ENCODE measurements at regions of chr14 and their contacts with region 1.

Region 1: DNA sequence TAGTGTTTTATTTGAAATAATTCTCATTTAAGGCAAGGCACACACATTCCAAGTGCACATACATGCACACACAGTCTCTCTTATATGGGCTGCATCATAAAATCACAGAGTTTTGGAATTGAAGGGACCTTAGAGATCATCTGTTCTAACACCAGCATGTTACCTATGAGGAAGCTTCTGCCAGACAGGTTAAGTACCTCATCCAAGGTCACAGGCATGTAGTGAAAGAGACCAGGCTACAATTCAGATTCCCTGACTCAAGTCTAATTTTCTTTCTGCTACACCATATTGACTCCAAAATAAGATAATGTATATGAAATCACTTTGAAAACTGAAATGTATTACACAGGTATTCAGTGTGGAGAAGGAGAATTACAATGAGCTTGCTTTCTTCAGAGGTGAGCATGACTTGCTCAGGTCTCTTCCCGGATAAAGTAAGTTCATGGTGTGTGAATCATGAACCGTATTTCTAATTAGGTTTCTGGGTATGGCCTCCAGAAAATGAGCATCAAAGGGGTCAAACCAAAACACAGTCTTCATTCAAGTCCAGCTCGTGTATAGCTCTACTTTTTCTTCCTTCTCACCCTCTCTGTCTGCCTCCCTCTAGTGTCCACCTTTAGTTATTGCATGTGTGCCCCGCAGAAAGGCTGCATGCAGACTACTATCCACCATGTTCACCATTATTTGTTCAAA is 411.9 kb downstream of the FUT8 start:
- H3K4me3 ChIP-seq: no peak overlapping the region
- H3K27ac ChIP-seq: no peak overlapping the region
- H3K4me1 ChIP-seq: no peaks in the 10 kb centered on the region
- CTCF ChIP-seq: peak; percentile 46

Region 2: GRCh38 chr14:65164068-65164824 is 660.2 kb before region 1 on chr14:
- CTCF ChIA-PET with region 1: interaction called, 13 read pairs
- POLR2A ChIA-PET with region 1: no interaction called
- H3K4me3 ChIP-seq: no peak overlapping the region
- H3K27ac ChIP-seq: no peak overlapping the region
- H3K4me1 ChIP-seq: no peaks in the 10 kb centered on the region
- CTCF ChIP-seq: no peak

Region 3: DNA sequence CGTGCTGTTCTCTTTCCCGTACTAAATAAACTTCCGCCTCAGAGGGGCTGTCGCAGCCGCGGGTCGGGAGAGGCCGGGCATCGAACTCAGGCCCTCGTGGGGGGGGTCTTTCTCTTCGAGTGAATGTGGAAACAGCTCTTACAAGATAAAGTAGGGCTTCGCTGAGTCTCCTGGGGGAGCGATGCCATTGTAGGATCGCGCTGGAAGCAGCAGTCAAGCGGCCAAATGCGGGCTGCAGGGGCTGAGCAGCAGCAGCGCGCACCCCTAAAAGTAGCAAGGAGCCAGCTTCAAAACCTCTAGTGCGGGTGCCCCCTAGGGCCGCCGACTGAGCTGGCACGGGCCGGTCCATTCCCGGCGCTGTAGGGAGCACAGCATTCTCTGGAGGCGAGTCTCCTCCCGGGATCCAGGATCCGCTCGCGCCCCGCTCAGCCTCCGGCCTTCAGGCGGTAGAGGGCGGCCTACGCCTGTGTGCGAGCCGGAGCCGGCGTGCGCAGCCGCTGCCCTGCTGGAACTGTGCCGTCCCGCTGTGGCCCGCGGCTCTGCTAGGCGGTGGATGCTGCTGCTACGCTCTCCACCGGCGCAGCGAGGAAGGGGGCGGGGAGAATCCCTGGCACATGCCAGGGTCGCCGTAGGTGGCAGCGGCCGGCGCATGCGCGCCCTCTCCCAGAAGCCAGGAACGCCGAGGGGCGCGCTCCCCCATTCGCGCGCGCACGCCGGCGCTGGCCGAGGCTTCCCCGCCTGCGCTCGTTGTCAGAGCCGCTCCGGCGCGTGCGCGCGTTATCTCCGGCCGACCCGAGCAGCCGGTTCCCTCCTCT is 412.2 kb before region 1 on chr14 and contains the start of gene FUT8:
- CTCF ChIA-PET with region 1: interaction called, 68 read pairs
- POLR2A ChIA-PET with region 1: interaction called, 5 read pairs
- H3K4me3 ChIP-seq: peak within 1 kb of the TSS; percentile 96
- H3K27ac ChIP-seq: peak within 1 kb of the TSS; percentile 96
- H3K4me1 ChIP-seq: 0 out of 2 replicates have a peak, but pooled peaks cover 2% of the 10 kb centered on the region
- CTCF ChIP-seq: peak; percentile 98

Region 4: DNA sequence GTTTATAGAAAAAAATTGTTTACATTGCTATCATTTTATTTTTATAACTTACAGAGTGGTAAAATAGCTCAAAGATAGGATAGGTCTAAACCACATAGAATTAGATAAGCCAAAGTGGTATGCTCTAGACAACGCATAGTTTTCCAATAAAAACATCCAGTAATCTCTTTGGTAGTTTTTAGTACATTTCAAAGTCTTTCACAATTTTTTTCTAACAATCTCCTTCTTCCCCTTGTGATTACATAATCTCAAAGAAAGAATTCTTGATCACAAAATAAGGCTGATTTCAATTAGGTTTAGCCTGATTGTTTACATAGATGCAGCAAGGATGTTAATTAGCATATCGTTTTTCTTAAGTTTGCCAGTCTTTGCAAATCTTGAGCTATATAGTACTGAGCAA is 48.1 kb after region 1 on chr14:
- CTCF ChIA-PET with region 1: no interaction called
- POLR2A ChIA-PET with region 1: no interaction called
- H3K4me3 ChIP-seq: no peak overlapping the region
- H3K27ac ChIP-seq: no peak overlapping the region
- H3K4me1 ChIP-seq: no peaks in the 10 kb centered on the region
- CTCF ChIP-seq: no peak

Region 5: GRCh38 chr14:66032800-66033199 is 208.4 kb after region 1 on chr14:
- CTCF ChIA-PET with region 1: no interaction called
- POLR2A ChIA-PET with region 1: no interaction called
- H3K4me3 ChIP-seq: no peak overlapping the region
- H3K27ac ChIP-seq: no peak overlapping the region
- H3K4me1 ChIP-seq: no peaks in the 10 kb centered on the region
- CTCF ChIP-seq: no peak

Measured in HEK293 (cell line).